IMR-90 (cell line): ENCODE measurements at regions of chr17 and their contacts with region 1.

Region 1: GRCh38 chr17:50087246-50087911 is 7.8 kb upstream of the PDK2 start:
- DNase-seq: peak; percentile 72
- ATAC-seq: peak; percentile 98
- H3K4me3 ChIP-seq: no peak overlapping the region
- H3K27ac ChIP-seq: no peak overlapping the region
- H3K4me1 ChIP-seq: no peaks in the 10 kb centered on the region
- H3K27me3 ChIP-seq: no peaks in the 10 kb centered on the region
- CTCF ChIP-seq: peak; percentile 97
- POLR2A ChIP-seq: no peak; the same call in 1 of the 2 replicates
- RAD21 ChIP-seq: peak; percentile 98

Region 2: GRCh38 chr17:49861150-49861892 is 226.1 kb before region 1 on chr17:
- CTCF ChIA-PET with region 1: no interaction called
- POLR2A ChIA-PET with region 1: no interaction called
- dilution Hi-C with region 1: no loop called
- in situ Hi-C with region 1: loop called (anchors 5 kb)
- intact Hi-C with region 1: loop called (anchors 1 kb)
- DNase-seq: peak; percentile 27
- ATAC-seq: peak; percentile 74
- H3K4me3 ChIP-seq: no peak overlapping the region
- H3K27ac ChIP-seq: no peak overlapping the region
- H3K4me1 ChIP-seq: peaks cover 3% of the 10 kb centered on the region; the same call in 1 of the 2 replicates
- H3K27me3 ChIP-seq: peaks cover 41% of the 10 kb centered on the region
- CTCF ChIP-seq: peak; percentile 93
- POLR2A ChIP-seq: no peak
- RAD21 ChIP-seq: peak; percentile 94

Region 3: DNA sequence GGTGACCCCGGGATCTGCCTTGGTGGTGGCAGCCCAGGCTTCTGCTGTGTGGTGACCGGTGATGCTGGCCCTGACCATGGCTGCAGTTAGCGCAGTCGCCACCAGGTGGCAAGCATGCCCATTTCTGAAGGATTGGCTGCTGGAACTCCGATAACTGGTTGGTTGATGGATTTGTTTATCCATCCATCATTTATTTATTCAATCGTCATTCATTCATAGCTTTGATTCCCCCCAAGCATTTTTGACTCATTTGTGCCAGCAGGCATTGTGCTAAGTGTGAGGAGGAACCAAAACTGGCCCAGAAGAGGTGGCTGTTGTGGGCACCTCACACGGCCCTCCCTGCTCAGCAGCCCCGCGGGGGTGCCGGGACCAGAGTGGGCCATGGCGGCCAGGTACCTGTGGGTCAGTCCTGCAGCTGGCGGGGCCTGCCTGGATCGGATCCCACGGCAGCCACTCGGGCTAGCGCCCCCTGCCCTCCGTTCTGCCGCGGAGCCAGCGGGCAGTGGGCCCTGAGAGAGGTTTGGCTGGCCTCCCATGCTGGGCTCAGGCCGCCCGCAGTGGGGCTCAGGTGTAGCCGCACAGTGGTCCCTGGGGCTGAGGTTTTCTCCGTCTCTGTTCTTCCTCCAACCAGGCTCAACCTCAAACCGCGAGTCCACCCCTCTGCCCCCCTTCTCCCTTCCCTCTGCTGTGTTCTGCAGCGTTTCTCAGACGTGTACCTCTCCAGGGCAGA is 60.3 kb before region 1 on chr17:
- CTCF ChIA-PET with region 1: interaction called, 9 read pairs
- POLR2A ChIA-PET with region 1: no interaction called
- dilution Hi-C with region 1: no loop called
- in situ Hi-C with region 1: loop called (anchors 5 kb)
- intact Hi-C with region 1: loop called (anchors 1 kb)
- DNase-seq: peak; percentile 75
- ATAC-seq: peak; percentile 74
- H3K4me3 ChIP-seq: peak overlapping the region; percentile 18
- H3K27ac ChIP-seq: peak overlapping the region; percentile 87
- H3K4me1 ChIP-seq: peaks cover 22% of the 10 kb centered on the region
- H3K27me3 ChIP-seq: no peaks in the 10 kb centered on the region
- CTCF ChIP-seq: peak; percentile 97
- POLR2A ChIP-seq: 0 out of 2 replicates have a peak, but pooled peaks have one; percentile 41
- RAD21 ChIP-seq: peak; percentile 95

Region 4: DNA sequence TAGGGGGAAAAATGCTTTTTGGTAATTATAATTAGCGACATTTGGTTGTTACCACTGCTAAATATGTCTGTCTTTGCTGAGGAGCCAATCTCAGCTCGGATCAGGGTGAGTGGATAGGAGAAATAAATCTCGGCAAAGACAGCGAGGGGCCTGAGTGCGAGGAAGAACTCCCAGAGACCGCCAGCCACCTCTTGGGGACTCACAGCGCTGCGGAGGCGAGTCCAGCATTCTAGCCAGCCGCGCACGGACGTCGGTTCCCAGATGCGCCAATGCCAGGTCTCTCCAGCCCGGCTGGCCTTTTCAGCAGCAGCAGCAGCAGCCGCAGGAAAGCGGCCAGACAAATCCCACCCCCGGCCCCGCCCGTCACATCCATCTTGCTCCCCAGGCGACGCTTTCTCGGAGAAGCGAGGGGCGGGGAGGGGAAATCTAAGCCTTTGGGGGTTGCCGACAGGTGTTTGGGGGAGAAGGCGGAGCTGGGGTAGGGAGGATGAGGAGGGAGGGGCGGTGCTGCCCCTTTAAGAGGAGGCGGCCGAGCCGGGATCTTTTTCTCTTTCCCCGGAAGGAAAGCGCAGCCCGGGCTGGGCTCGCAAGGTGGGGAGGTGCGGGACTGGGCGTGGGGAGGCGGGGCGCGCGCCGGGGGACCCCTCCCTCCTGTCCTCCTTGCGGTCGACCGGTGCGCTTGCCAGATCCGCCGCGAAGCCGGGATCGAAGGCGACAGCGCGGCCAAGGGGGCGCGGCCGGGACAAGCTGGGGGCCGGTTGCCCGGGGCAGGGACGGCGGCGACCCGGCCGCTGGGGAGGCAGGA is 31.8 kb before region 1 on chr17 and contains the start of gene ITGA3:
- CTCF ChIA-PET with region 1: interaction called, 11 read pairs
- POLR2A ChIA-PET with region 1: no interaction called
- dilution Hi-C with region 1: no loop called
- in situ Hi-C with region 1: no loop called
- intact Hi-C with region 1: no loop called
- DNase-seq: peak; percentile 85
- ATAC-seq: peak; percentile 46
- H3K4me3 ChIP-seq: peak within 1 kb of the TSS; percentile 93
- H3K27ac ChIP-seq: peak within 1 kb of the TSS; percentile 57
- H3K4me1 ChIP-seq: peaks cover 53% of the 10 kb centered on the region
- H3K27me3 ChIP-seq: no peaks in the 10 kb centered on the region
- CTCF ChIP-seq: no peak
- POLR2A ChIP-seq: peak; percentile 73; the same call in 1 of the 2 replicates
- RAD21 ChIP-seq: no peak
- total RNA-seq, gene ITGA3: 78.0 and 80.0 TPM in 2 replicates